ENCODE measurements at regions of chr1 and their contacts with region 1.

Region 1: GRCh38 chr1:204506961-204507387 is 9.2 kb upstream of the MDM4 start:
- DNase-seq: peak; percentile 93 to 94 (median 94)
- H3K4me3 ChIP-seq: peak overlapping the region; percentile 53 to 83
- H3K4me3 Mint-ChIP-seq: peak overlapping the region; percentile 86 to 97 (median 92)
- H3K27ac ChIP-seq: peak overlapping the region; percentile 78
- H3K27ac Mint-ChIP-seq: peak overlapping the region; percentile 87 to 100 (median 99)
- H3K4me1 ChIP-seq: peaks cover 29% of the 10 kb centered on the region
- H3K4me1 Mint-ChIP-seq: peaks cover 21 to 45% (median 33%) of the 10 kb centered on the region in 4 donors
- H3K27me3 ChIP-seq: no peaks in the 10 kb centered on the region
- H3K27me3 Mint-ChIP-seq: peaks cover 2 to 13% of the 10 kb centered on the region in 2 donors

Region 2: GRCh38 chr1:204398217-204399081 is 108.5 kb before region 1 on chr1:
- CTCF ChIA-PET with region 1: interaction called, 11 read pairs
- POLR2A ChIA-PET with region 1: no interaction called
- intact Hi-C with region 1: no loop called
- DNase-seq: peak; percentile 67 to 78 (median 71)
- H3K4me3 ChIP-seq: no peak overlapping the region
- H3K4me3 Mint-ChIP-seq: no peak overlapping the region
- H3K27ac ChIP-seq: no peak overlapping the region
- H3K27ac Mint-ChIP-seq: peak overlapping the region; percentile 74 to 92 (median 89)
- H3K4me1 ChIP-seq: peaks cover under 1% of the 10 kb centered on the region
- H3K4me1 Mint-ChIP-seq: peaks cover 0 to 12% (median 4%) of the 10 kb centered on the region in 4 donors
- H3K27me3 ChIP-seq: no peaks in the 10 kb centered on the region
- H3K27me3 Mint-ChIP-seq: no peaks in the 10 kb centered on the region

Region 3: DNA sequence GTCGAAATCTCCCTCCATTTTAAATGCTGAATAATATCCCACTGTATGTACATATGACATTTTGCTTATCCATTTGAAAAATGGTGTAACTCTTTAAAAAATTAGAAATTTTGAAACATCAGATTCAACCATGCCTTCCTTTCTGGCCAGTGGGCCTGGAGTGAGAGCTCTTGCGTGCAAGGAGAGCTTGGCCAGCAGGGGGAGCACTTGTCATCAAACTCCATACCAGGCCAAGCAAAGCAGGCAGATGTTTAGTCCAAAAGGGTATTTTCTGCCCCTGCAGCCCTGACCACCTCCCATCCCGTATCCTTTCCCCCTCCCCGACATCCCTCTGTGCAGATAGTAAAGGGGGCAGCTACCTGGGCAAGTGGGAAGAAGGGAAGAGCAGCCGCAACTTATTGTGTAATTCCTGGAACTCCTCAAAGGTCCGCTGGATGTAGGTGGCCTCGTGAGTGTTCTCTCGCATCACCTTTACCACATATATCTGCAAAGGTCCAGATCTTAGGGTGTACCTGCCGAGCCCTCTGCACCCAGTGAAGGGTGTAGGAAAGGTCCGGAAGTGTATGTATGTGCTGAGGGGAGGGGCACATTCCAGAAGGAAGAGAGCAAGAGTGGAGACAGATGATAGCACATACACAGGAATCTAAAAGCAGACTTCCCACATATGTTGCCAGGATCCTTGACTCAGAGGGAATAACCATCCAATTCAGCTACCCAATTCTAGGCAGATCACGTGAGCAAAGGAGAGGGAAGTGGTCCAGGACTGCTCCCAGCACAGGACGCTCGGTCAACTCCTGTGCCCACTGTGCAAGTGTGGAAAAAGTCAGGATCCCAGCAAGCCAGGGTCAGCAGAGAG is 75.4 kb before region 1 on chr1:
- CTCF ChIA-PET with region 1: interaction called, 1,077 read pairs
- POLR2A ChIA-PET with region 1: interaction called, 5 read pairs
- intact Hi-C with region 1: loop called (anchors 1 kb)
- DNase-seq: peak; percentile 68 to 75 (median 71)
- H3K4me3 ChIP-seq: no peak overlapping the region
- H3K4me3 Mint-ChIP-seq: no peak overlapping the region
- H3K27ac ChIP-seq: no peak overlapping the region
- H3K27ac Mint-ChIP-seq: peak overlapping the region in 6 of 7 donors; percentile 8 to 78 (median 71)
- H3K4me1 ChIP-seq: no peaks in the 10 kb centered on the region
- H3K4me1 Mint-ChIP-seq: peaks cover 0 to 9% (median 6%) of the 10 kb centered on the region in 4 donors
- H3K27me3 ChIP-seq: no peaks in the 10 kb centered on the region
- H3K27me3 Mint-ChIP-seq: no peaks in the 10 kb centered on the region

Region 4: DNA sequence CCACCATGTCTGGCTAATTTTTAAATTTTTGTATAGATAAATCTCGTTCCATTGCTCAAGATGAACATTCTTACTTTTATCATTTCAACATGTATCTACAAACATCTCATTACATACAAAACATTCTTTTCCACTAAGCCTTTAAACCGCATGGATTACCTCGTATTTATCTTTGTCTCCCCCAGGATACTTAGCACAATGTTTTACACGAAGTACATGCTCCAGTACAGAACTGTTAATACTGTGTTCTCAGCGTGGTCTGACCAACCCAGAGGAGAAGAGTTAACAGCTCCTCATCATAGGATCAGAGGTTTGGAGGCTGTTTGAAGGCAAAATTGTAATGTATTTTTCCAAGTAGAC is 19.7 kb before region 1 on chr1:
- CTCF ChIA-PET with region 1: interaction called, 97 read pairs
- POLR2A ChIA-PET with region 1: interaction called, 104 read pairs
- intact Hi-C with region 1: no loop called
- DNase-seq: no peak
- H3K4me3 ChIP-seq: no peak overlapping the region
- H3K4me3 Mint-ChIP-seq: peak overlapping the region in 1 of 8 donors; percentile 3
- H3K27ac ChIP-seq: no peak overlapping the region
- H3K27ac Mint-ChIP-seq: peak overlapping the region in 1 of 7 donors; percentile 64
- H3K4me1 ChIP-seq: peaks cover 37% of the 10 kb centered on the region
- H3K4me1 Mint-ChIP-seq: peaks cover 37 to 72% (median 53%) of the 10 kb centered on the region in 4 donors
- H3K27me3 ChIP-seq: no peaks in the 10 kb centered on the region
- H3K27me3 Mint-ChIP-seq: no peaks in the 10 kb centered on the region

Region 5: DNA sequence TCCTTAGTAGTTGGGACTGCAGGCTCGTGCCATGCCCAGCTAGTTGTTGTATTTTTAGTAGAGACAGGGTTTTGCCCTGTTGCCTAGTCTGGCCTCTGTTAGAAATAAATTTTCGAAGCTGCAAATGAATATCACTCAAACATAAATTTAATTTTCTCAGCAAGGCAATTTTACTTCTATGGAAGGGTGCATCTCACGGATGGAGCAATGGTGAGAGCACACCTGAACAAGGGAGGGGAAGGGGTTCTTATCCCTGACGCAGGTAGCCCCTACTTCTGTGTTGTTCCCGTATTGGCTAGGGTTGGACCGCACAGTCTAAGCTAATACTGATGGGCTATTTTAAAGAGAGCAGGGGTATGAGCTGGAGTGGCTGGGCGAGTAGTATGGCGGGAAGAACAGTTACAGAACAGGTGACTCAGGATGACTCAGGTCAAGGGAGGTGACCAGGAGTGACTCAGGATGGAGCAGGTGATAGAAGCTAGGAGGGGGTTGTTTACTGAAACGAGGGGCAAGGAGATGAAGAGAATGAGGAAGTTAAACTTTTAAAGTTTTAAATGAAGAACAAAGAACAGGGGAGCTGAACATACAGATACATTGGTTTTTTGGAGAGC is 16.7 kb after region 1 on chr1:
- CTCF ChIA-PET with region 1: interaction called, 63 read pairs
- POLR2A ChIA-PET with region 1: interaction called, 208 read pairs
- intact Hi-C with region 1: loop called (anchors 1 kb)
- DNase-seq: no peak
- H3K4me3 ChIP-seq: no peak overlapping the region
- H3K4me3 Mint-ChIP-seq: peak overlapping the region in 7 of 8 donors; percentile 21 to 86 (median 55)
- H3K27ac ChIP-seq: no peak overlapping the region
- H3K27ac Mint-ChIP-seq: peak overlapping the region; percentile 14 to 95 (median 67)
- H3K4me1 ChIP-seq: peaks cover 62% of the 10 kb centered on the region
- H3K4me1 Mint-ChIP-seq: peaks cover 32 to 62% (median 44%) of the 10 kb centered on the region in 4 donors
- H3K27me3 ChIP-seq: no peaks in the 10 kb centered on the region
- H3K27me3 Mint-ChIP-seq: no peaks in the 10 kb centered on the region

Region 6: DNA sequence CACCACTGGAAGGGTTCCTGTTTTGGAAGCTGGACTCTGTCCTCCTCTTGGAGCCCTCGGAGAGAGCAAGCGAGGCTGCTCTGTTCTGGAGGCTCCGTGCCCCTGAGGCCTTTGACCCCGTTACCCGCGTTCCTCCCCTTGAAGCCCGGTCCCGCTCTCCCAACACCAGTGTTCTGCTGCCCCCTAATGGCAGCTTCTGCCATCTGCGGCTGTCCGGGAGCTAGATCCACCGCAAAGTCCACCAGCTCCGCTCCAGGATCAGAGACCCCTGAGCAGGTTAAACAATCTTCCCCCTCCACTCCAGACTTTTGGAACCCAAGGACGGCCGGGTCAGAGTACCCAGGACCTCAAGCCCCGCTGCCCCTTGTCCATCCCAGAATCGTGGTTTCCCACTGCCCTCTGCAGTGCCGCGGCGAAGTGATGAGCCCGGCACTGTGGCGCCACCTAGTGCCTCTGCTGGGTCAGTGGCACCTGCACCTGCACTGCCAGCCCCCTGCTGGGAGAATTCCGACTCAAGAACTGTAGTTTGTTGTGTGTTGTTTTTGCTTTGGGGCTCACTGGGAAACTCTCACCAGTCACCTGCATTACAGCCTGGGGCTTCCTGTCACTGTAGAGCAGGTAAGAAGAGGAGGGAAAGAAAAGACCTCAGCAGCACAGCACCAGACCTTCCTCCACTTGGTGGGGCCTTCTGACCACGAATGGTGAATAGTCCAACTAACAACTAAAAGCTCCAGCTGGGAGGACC is 300.1 kb after region 1 on chr1:
- CTCF ChIA-PET with region 1: interaction called, 9 read pairs
- POLR2A ChIA-PET with region 1: no interaction called
- intact Hi-C with region 1: loop called (anchors 5 kb)
- DNase-seq: peak; percentile 79 to 88 (median 85)
- H3K4me3 ChIP-seq: peak overlapping the region in 1 of 2 donors; percentile 47
- H3K4me3 Mint-ChIP-seq: peak overlapping the region; percentile 82 to 95 (median 92)
- H3K27ac ChIP-seq: no peak overlapping the region
- H3K27ac Mint-ChIP-seq: peak overlapping the region; percentile 1 to 93 (median 62)
- H3K4me1 ChIP-seq: no peaks in the 10 kb centered on the region
- H3K4me1 Mint-ChIP-seq: peaks cover 0 to 6% (median 4%) of the 10 kb centered on the region in 4 donors
- H3K27me3 ChIP-seq: no peaks in the 10 kb centered on the region
- H3K27me3 Mint-ChIP-seq: no peaks in the 10 kb centered on the region